GM10248 (cell line): ENCODE measurements at regions of chr1 and their contacts with region 1.

Region 1: DNA sequence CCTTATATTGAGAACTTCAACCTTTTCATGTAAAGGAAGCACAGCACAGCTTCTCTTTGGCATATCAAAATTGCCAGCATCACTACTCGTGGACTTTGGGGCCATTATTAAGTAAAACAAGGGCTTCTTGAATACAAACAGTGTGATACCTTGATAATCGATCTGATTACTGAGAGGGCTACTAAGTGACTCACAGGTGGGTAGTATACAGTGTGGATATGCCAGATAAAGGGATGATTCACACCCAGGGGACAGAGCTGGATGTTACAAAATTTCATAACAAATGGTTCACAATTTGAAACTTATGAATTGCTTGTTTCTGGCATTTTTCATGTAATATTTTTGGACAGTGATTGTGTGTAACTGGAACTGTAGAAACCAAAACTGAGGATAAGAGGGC is 15.4 kb downstream of the HDAC1 start:
- DNase-seq: no peak
- CTCF ChIP-seq: no peak

Region 2: GRCh38 chr1:32291708-32292492 is 15.4 kb before region 1 on chr1 and contains the start of gene HDAC1:
- CTCF ChIA-PET with region 1: interaction called, 14 read pairs
- POLR2A ChIA-PET with region 1: interaction called, 5 read pairs
- DNase-seq: peak; percentile 99
- CTCF ChIP-seq: no peak

Region 3: GRCh38 chr1:32321712-32322291 is 14.5 kb after region 1 on chr1:
- CTCF ChIA-PET with region 1: interaction called, 94 read pairs
- POLR2A ChIA-PET with region 1: no interaction called
- DNase-seq: no peak
- CTCF ChIP-seq: no peak

Region 4: DNA sequence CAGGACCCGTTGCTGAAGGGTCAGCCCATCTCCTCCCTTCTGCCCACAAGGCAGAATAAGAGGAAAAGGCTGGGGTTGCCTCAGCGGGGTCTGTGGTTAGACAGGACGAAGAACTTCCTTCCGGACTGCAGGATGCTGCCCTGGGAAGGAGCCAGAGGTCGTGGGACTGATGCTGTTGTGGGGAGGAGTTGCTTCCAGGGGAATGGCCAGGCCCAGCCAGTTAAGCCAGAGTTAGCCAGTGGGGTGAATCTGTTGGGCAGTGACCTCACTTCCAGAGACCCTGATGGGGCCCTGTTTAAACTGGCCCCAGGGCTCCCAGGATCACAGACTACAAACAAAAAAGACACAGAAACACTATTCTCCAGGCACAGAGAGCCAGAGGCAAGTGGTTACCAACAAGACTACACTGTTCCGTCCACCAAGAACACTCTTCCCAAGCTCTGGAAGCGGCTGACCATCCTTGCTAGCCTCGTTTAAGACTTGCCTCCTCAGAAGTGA is 41.9 kb after region 1 on chr1:
- CTCF ChIA-PET with region 1: no interaction called
- POLR2A ChIA-PET with region 1: no interaction called
- DNase-seq: no peak
- CTCF ChIP-seq: no peak

Region 5: GRCh38 chr1:32377541-32378220 is 70.4 kb after region 1 on chr1:
- CTCF ChIA-PET with region 1: no interaction called
- POLR2A ChIA-PET with region 1: no interaction called
- DNase-seq: no peak
- CTCF ChIP-seq: no peak

Region 6: GRCh38 chr1:32464191-32464715 is 156.9 kb after region 1 on chr1:
- CTCF ChIA-PET with region 1: no interaction called
- POLR2A ChIA-PET with region 1: no interaction called
- DNase-seq: no peak
- CTCF ChIP-seq: no peak